ENCODE measurements at regions of chr3 and their contacts with region 1.

Region 1: GRCh38 chr3:136752422-136753325 is 496 bp upstream of the STAG1 start:
- DNase-seq: peak; percentile 99
- H3K4me3 ChIP-seq: peak overlapping the region; percentile 83
- H3K27ac ChIP-seq: peak overlapping the region; percentile 96
- H3K4me1 ChIP-seq: peaks cover 48% of the 10 kb centered on the region
- H3K27me3 ChIP-seq: no peaks in the 10 kb centered on the region
- CTCF ChIP-seq: no peak

Region 2: GRCh38 chr3:136075218-136075808 is 677.4 kb before region 1 on chr3:
- intact Hi-C with region 1: loop called (anchors 10 kb)
- DNase-seq: peak; percentile 53
- H3K4me3 ChIP-seq: no peak overlapping the region
- H3K27ac ChIP-seq: peak overlapping the region; percentile 64
- H3K4me1 ChIP-seq: peaks cover 38% of the 10 kb centered on the region
- H3K27me3 ChIP-seq: no peaks in the 10 kb centered on the region
- CTCF ChIP-seq: peak; percentile 92

Region 3: GRCh38 chr3:136120373-136121348 is 632.0 kb before region 1 on chr3:
- intact Hi-C with region 1: no loop called
- DNase-seq: no peak
- H3K4me3 ChIP-seq: no peak overlapping the region
- H3K27ac ChIP-seq: no peak overlapping the region
- H3K4me1 ChIP-seq: no peaks in the 10 kb centered on the region
- H3K27me3 ChIP-seq: no peaks in the 10 kb centered on the region
- CTCF ChIP-seq: no peak

Region 4: DNA sequence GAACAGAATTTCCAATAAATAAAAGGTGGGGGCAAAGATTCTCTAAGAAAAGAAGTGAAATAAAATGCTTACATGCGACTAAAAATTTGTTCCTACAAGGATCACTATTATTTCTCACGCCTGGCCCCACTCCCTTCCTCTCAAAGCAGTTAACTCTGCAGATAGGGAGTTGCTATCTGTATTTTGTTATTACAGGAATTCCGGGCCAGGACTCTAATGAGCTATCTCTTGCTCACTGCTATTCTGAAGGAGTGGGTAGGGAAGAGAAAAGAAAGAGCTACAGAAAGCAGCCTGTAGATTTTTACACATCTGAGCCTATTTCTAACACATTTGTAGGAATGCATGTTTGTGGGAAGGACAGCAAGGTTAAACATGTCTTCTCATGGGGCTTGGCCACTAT is 362.1 kb before region 1 on chr3:
- intact Hi-C with region 1: loop called (anchors 2 kb)
- DNase-seq: no peak
- H3K4me3 ChIP-seq: no peak overlapping the region
- H3K27ac ChIP-seq: no peak overlapping the region
- H3K4me1 ChIP-seq: peaks cover 11% of the 10 kb centered on the region
- H3K27me3 ChIP-seq: no peaks in the 10 kb centered on the region
- CTCF ChIP-seq: no peak

Region 5: GRCh38 chr3:137013955-137014688 is 261.4 kb after region 1 on chr3:
- intact Hi-C with region 1: loop called (anchors 5 kb)
- DNase-seq: peak; percentile 88
- H3K4me3 ChIP-seq: peak overlapping the region; percentile 64
- H3K27ac ChIP-seq: peak overlapping the region; percentile 64
- H3K4me1 ChIP-seq: peaks cover 5% of the 10 kb centered on the region
- H3K27me3 ChIP-seq: no peaks in the 10 kb centered on the region
- CTCF ChIP-seq: peak; percentile 89